ENCODE measurements at regions of chr14 and their contacts with region 1.

Region 1: DNA sequence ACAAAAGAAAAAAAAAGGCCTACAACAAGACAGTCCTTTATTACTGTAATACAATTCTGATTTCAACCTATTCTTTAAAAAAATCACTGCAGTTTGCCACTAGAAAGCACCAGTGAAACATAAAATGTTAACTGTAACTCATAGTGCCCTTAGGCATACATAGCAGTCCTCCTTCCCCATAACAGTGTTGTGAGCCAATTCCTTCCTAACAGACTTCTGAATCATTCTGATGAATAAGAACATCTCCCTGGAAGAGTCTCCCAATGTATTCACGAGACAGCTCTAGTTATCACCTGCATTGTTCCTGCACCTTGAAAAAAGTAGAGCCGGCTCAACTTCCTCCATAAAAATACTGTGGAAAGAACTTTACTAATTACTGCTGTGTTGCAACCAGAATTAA is 213.6 kb upstream of the FSCB start:
- DNase-seq: no peak
- ATAC-seq: no peak
- H3K4me3 ChIP-seq: no peak overlapping the region
- H3K4me3 Mint-ChIP-seq: no peak overlapping the region
- H3K27ac ChIP-seq: no peak overlapping the region
- H3K27ac Mint-ChIP-seq: no peak overlapping the region
- H3K4me1 ChIP-seq: no peaks in the 10 kb centered on the region
- H3K4me1 Mint-ChIP-seq: no peaks in the 10 kb centered on the region
- H3K27me3 ChIP-seq: no peaks in the 10 kb centered on the region
- H3K27me3 Mint-ChIP-seq: no peaks in the 10 kb centered on the region
- CTCF ChIP-seq: no peak

Region 2: DNA sequence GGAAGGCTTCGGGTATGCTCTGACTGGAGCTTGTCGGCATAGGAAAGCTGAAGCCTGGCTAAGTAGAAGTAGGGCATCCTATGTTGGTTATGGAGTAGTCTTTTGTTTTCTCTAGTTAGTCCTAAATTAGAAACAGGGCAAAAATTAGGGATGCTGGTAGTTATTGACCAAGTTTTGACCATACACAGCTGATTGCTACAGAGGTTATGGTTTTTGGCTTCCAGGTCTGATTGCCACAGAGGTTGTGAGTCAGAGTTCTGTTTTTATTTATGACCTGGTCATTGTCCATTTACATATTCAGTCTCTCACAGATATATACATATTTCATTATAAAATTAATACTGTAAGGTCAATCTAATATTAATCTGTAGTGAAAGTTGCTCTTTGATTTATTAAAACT is 432.8 kb before region 1 on chr14:
- CTCF ChIA-PET with region 1: no interaction called
- POLR2A ChIA-PET with region 1: no interaction called
- intact Hi-C with region 1: no loop called
- DNase-seq: no peak
- ATAC-seq: no peak
- H3K4me3 ChIP-seq: no peak overlapping the region
- H3K4me3 Mint-ChIP-seq: no peak overlapping the region
- H3K27ac ChIP-seq: no peak overlapping the region
- H3K27ac Mint-ChIP-seq: no peak overlapping the region
- H3K4me1 ChIP-seq: no peaks in the 10 kb centered on the region
- H3K4me1 Mint-ChIP-seq: no peaks in the 10 kb centered on the region
- H3K27me3 ChIP-seq: no peaks in the 10 kb centered on the region
- H3K27me3 Mint-ChIP-seq: no peaks in the 10 kb centered on the region
- CTCF ChIP-seq: no peak

Region 3: GRCh38 chr14:44662250-44662891 is 58.3 kb before region 1 on chr14:
- CTCF ChIA-PET with region 1: no interaction called
- POLR2A ChIA-PET with region 1: no interaction called
- intact Hi-C with region 1: no loop called
- DNase-seq: peak in 1 of 14 experiments; percentile 20
- ATAC-seq: no peak
- H3K4me3 ChIP-seq: no peak overlapping the region
- H3K4me3 Mint-ChIP-seq: peak overlapping the region; percentile 64
- H3K27ac ChIP-seq: no peak overlapping the region
- H3K27ac Mint-ChIP-seq: no peak overlapping the region
- H3K4me1 ChIP-seq: peaks cover 2% of the 10 kb centered on the region
- H3K4me1 Mint-ChIP-seq: peaks cover 20% of the 10 kb centered on the region
- H3K27me3 ChIP-seq: no peaks in the 10 kb centered on the region
- H3K27me3 Mint-ChIP-seq: no peaks in the 10 kb centered on the region
- CTCF ChIP-seq: no peak

Region 4: GRCh38 chr14:44736326-44736725 is 15.6 kb after region 1 on chr14:
- CTCF ChIA-PET with region 1: no interaction called
- POLR2A ChIA-PET with region 1: no interaction called
- intact Hi-C with region 1: loop called in 1 of 2 experiments (anchors 1 kb)
- DNase-seq: no peak
- ATAC-seq: no peak
- H3K4me3 ChIP-seq: no peak overlapping the region
- H3K4me3 Mint-ChIP-seq: no peak overlapping the region
- H3K27ac ChIP-seq: no peak overlapping the region
- H3K27ac Mint-ChIP-seq: no peak overlapping the region
- H3K4me1 ChIP-seq: no peaks in the 10 kb centered on the region
- H3K4me1 Mint-ChIP-seq: no peaks in the 10 kb centered on the region
- H3K27me3 ChIP-seq: no peaks in the 10 kb centered on the region
- H3K27me3 Mint-ChIP-seq: peaks cover 13% of the 10 kb centered on the region
- CTCF ChIP-seq: no peak

Measured in CD4-positive, alpha-beta T cell (primary cell).